Ascending aorta (tissue), 2 donors: ENCODE measurements at regions of chr6 and their contacts with region 1.

Region 1: GRCh38 chr6:26017632-26017966 is 55.0 kb downstream of the TRIM38 start:
- DNase-seq: peak; percentile 75 to 94
- H3K4me3 ChIP-seq: peak overlapping the region; percentile 36 to 73
- H3K27ac ChIP-seq: peak overlapping the region; percentile 80 to 86
- H3K4me1 ChIP-seq: peaks cover 0 to 3% of the 10 kb centered on the region in 2 donors
- H3K27me3 ChIP-seq: no peaks in the 10 kb centered on the region
- CTCF ChIP-seq: peak; percentile 13 to 54 (median 54)

Region 2: GRCh38 chr6:25866011-25866410 is 151.6 kb before region 1 on chr6:
- intact Hi-C with region 1: no loop called
- DNase-seq: no peak
- H3K4me3 ChIP-seq: no peak overlapping the region
- H3K27ac ChIP-seq: no peak overlapping the region
- H3K4me1 ChIP-seq: no peaks in the 10 kb centered on the region
- H3K27me3 ChIP-seq: no peaks in the 10 kb centered on the region
- CTCF ChIP-seq: no peak

Region 3: GRCh38 chr6:25975923-25976560 is 41.6 kb before region 1 on chr6:
- intact Hi-C with region 1: no loop called
- DNase-seq: no peak
- H3K4me3 ChIP-seq: no peak overlapping the region
- H3K27ac ChIP-seq: no peak overlapping the region
- H3K4me1 ChIP-seq: peaks cover 5 to 9% of the 10 kb centered on the region in 2 donors
- H3K27me3 ChIP-seq: no peaks in the 10 kb centered on the region
- CTCF ChIP-seq: no peak

Region 4: DNA sequence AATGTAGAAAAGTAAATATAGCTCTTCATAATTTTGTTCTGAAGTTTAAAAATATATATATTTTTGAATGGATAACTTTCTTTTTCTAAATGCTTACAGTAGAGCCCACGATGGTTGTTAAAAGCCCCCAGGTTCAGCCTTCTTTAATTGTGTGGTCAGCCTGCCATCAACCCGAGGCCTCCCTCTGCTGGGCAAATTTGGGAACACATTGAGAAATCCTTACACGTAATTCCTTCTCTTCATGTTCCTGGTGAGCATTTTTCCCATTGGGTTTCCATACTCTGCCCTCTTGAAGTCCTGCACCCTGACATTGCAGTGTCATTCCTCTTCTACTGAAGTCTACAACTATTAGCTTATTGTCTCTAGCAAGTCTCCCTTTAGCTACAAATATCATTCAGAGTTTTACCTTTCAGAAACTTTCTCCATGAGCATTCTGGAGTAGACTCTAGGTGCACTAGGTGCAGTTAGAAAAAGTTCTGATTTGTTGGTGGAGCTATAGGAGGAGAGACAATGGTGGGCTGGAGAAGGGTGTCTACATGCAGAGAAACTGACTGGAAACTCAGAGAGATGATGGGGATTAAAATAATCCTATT is 14.4 kb before region 1 on chr6:
- intact Hi-C with region 1: loop called (anchors 1 kb)
- DNase-seq: peak in 1 of 2 donors; percentile 80
- H3K4me3 ChIP-seq: no peak overlapping the region
- H3K27ac ChIP-seq: no peak overlapping the region
- H3K4me1 ChIP-seq: no peaks in the 10 kb centered on the region
- H3K27me3 ChIP-seq: no peaks in the 10 kb centered on the region
- CTCF ChIP-seq: peak; percentile 54 to 78 (median 77)

Region 5: GRCh38 chr6:26103770-26104456 is 86.3 kb after region 1 on chr6:
- intact Hi-C with region 1: no loop called
- DNase-seq: peak; percentile 68 to 94
- H3K4me3 ChIP-seq: peak overlapping the region; percentile 67 to 79
- H3K27ac ChIP-seq: peak overlapping the region; percentile 93 to 95
- H3K4me1 ChIP-seq: peaks cover 0 to 13% of the 10 kb centered on the region in 2 donors
- H3K27me3 ChIP-seq: no peaks in the 10 kb centered on the region
- CTCF ChIP-seq: peak; percentile 13 to 53 (median 51)